PC-3 (cell line): ENCODE measurements at regions of chr10 and their contacts with region 1.

Region 1: DNA sequence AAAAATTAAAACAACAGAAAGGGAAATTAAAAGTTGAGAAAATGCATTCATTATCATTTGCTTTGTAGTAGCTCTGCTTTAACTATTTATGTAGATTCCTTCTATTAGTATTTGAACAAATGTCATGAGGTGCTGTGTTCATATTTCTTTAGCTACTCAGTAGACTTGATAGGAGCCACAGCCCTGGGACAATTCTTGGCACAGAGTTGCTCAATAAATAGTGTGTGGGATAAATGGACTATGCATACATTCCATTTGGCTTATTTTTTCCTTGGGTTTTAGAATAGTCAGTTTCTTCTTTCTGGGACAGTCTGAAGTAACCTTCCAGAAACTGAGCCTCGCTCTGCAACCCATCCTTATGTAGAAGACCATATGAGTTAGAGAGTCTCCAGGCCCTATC is 13.4 kb downstream of the RPP30 start:
- DNase-seq: peak; percentile 63
- ATAC-seq: peak; percentile 58
- H3K4me3 ChIP-seq: peak overlapping the region; percentile 7; the same call in 1 of the 2 replicates
- H3K27ac ChIP-seq: peak overlapping the region; percentile 71
- H3K4me1 ChIP-seq: peaks cover 50% of the 10 kb centered on the region
- H3K27me3 ChIP-seq: no peaks in the 10 kb centered on the region
- CTCF ChIP-seq: no peak

Region 2: DNA sequence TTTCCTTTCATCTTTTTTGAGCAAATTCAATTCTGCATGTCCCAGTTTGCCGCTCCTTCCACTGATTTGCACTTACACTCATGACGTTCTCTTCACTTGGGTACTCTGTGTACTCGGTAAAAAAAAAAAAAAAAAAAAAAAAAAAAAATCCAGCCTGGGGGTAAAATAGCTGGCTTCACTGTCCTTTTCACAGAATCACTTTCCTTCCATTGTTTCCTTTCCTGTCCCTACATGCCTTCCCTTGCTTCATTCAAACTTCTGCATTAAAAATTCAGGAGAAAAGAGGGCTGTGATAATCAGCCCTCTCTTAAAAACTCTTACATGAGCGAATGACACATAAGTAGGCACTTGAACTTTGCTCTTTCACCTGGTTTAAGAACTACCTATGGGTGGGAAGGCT is 27.0 kb after region 1 on chr10:
- CTCF ChIA-PET with region 1: no interaction called
- POLR2A ChIA-PET with region 1: no interaction called
- intact Hi-C with region 1: loop called (anchors 1 kb)
- DNase-seq: no peak
- ATAC-seq: no peak
- H3K4me3 ChIP-seq: no peak overlapping the region
- H3K27ac ChIP-seq: no peak overlapping the region
- H3K4me1 ChIP-seq: peaks cover 6% of the 10 kb centered on the region
- H3K27me3 ChIP-seq: no peaks in the 10 kb centered on the region
- CTCF ChIP-seq: no peak

Region 3: GRCh38 chr10:90969947-90970684 is 84.9 kb after region 1 on chr10:
- CTCF ChIA-PET with region 1: interaction called, 5 read pairs
- POLR2A ChIA-PET with region 1: no interaction called
- intact Hi-C with region 1: loop called (anchors 1 kb)
- DNase-seq: peak; percentile 50
- ATAC-seq: peak; percentile 69
- H3K4me3 ChIP-seq: no peak overlapping the region
- H3K27ac ChIP-seq: peak overlapping the region; percentile 90
- H3K4me1 ChIP-seq: peaks cover 23% of the 10 kb centered on the region
- H3K27me3 ChIP-seq: no peaks in the 10 kb centered on the region
- CTCF ChIP-seq: peak; percentile 46

Region 4: DNA sequence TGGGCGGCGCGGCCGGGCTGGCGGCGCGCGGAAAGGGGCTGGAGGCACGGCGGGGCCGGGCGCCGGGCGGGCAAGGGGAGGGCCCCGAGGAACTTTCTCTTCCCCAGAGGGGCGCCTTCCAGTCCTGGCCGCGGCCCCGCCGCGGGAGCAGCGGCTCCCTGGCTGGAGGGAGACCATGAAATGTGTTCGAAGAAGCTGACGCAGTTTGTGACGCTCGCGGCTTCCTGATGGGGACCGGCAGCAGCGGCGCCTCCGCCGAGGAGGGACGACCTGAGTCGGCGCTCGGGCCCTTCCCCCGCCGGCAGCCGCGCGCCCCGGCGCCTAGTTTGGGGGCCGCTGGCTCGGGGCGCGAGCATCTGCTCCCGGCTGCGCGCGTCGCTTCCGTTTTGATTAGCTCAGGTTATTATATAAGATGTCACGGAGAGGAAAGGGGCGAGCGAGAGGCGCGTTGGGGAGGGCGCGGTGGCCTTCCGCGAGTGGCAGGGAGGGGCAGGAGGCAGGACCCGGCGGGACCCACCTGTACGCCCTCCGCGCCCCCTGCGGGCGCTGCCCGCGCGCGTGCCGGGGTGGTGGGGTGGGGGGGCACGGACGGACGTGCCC is 278.2 kb after region 1 on chr10:
- CTCF ChIA-PET with region 1: no interaction called
- POLR2A ChIA-PET with region 1: no interaction called
- intact Hi-C with region 1: loop called (anchors 5 kb)
- DNase-seq: peak; percentile 43
- ATAC-seq: peak; percentile 30
- H3K4me3 ChIP-seq: peak overlapping the region; percentile 82
- H3K27ac ChIP-seq: peak overlapping the region; percentile 40
- H3K4me1 ChIP-seq: peaks cover 10% of the 10 kb centered on the region; the same call in 1 of the 2 replicates
- H3K27me3 ChIP-seq: no peaks in the 10 kb centered on the region
- CTCF ChIP-seq: no peak